ENCODE measurements at regions of chr9 and their contacts with region 1.

Region 1: GRCh38 chr9:136944519-136945279 is at the starts of genes C8G and FBXW5:
- DNase-seq: peak; percentile 67 to 97 (median 93)

Region 2: DNA sequence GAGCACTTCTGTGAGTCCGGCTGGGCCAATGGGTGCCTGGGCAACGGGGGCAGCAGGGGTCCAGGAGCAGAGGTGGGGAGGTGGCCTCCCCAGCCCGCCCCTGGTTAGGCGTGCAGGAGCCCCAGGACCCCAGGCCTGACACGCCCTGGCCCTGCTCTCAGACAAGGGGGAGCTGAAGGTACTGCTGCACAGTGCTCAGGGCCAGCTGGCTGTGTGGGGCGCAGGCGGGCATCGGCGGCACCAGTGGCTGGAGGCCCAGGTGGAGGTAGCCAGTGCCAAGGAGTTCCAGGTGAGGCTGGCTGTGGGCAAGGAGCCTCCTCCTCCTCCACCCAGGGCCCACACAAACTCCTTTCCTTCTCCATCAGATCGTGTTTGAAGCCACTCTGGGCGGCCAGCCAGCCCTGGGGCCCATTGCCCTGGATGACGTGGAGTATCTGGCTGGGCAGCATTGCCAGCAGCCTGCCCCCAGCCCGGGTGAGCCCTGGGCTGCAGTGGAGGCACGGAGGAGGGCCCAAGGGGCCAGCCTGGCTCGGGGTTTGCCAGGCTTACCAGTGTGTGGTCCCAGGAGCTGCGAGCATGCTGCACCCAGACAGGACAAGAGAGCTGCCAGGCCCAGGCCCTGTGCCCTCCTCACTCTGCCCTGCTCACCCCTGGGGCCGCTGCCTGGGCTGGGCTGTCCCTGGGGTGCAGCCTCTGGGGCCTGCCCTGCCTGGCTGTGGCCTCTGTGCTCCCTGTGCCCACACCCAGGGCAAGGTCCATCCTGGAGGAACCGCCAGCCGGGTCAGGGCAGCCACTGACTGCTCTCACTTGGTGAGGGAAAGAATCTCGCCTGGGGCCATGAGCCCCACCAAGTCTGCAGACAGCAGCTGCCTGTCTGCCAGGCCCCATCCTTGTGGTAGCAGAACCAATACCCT is 85.6 kb before region 1 on chr9:
- intact Hi-C with region 1: loop called (anchors 10 kb)
- DNase-seq: peak in 39 of 42 donors; percentile 51 to 89 (median 73)

Region 3: DNA sequence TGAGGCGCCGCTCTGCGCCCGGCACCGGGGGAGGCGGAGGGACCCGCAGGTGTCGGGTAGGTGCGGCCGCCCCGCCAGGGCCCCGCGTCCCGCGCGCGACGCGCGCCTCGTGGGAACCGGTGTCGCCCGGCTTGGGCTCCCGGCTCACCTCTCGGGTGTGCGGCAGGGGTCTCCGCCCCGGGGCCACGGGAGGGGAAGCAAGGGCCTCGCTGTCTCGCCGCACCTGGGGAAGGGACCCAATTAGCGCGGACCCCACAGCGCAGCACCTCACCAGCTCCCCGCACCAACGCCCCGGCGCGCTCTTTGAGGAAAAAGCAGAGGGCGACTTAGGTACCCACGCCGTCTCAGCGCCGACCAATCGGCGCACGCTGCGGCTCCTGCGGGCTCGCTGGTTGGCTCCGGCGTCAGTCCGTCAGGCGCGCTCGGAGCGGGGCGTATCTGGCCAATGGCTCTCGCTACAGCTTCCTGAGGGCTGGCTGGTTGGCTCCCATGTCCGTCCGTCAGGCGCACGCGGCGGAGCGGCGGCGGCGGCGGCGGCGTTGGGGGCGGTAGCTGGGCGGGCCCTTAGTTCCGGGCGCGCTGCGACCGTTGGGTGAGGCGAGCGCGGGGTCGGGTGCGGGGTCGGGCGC is 58.6 kb before region 1 on chr9 and contains the start of gene TRAF2:
- intact Hi-C with region 1: loop called (anchors 10 kb)
- DNase-seq: peak; percentile 95 to 100 (median 99)

Region 4: DNA sequence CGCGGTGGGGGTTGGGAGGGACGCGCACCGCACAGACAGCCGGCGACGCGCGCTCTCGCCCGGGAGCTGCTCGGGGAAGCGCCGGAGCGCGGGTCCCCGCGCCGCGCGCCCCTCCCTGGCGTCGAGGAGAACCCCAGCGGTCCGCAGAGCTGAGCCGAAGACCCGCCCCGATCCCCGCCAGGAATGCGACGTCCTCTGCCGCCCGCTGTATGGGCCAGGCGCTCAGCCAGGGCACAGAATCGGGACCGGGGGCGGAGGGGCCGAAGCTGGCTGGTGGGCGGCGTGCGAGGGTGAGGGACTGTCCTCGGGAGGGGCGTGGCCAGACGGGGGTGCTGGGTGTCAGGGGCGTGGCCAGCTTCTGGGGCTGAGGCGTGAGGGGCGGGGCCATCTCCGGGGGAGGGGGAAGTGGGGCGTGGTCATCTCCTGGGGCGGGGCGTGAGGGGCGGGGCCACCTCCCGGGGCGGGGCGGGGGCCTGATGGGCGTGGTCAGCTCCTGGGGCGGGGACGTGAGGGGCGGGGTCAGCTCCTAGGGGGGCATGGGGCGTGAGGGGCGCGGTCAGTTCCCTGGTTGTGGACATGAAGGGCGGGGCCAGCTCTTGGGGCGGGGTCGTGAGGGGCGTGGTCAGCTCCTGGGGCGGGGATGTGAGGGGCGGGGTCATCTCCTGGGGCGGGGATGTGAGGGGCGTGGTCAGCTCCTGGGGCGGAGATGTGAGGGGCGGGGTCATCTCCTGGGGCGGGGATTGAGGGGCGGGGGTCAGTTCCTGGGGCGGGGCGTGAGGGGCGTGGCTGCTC is 33.6 kb after region 1 on chr9:
- intact Hi-C with region 1: loop called (anchors 5 kb)
- DNase-seq: peak; percentile 84 to 98 (median 92)